IMR-90 (cell line): ENCODE measurements at regions of chr2 and their contacts with region 1.

Region 1: DNA sequence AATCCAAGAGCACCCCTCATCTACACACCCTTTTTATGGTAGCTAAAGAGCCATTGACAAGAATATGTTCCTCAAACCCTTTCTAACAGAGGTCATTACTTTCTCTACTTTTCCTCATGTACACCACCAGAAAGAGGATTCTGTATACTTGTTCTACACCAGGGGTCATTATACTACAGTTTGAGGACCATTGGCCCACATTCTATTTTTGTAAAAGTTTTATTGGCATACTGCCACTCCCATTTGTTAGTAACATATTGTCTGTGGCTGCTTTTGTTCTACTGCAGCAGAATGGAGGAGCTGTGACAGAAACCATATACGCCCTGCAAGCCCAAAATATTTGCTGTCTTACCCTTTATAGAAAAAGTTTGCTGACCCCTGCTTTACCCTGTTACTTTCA is 14.3 kb downstream of the HTR2B start:
- DNase-seq: peak; percentile 60
- ATAC-seq: no peak; the same call in 1 of the 2 replicates
- H3K4me3 ChIP-seq: no peak overlapping the region
- H3K27ac ChIP-seq: peak overlapping the region; percentile 47; the same call in 1 of the 2 replicates
- H3K4me1 ChIP-seq: peaks cover 16% of the 10 kb centered on the region
- H3K27me3 ChIP-seq: no peaks in the 10 kb centered on the region
- CTCF ChIP-seq: peak; percentile 40
- POLR2A ChIP-seq: no peak
- RAD21 ChIP-seq: peak; percentile 49

Region 2: GRCh38 chr2:231161877-231162329 is 51.4 kb after region 1 on chr2:
- CTCF ChIA-PET with region 1: no interaction called
- POLR2A ChIA-PET with region 1: no interaction called
- dilution Hi-C with region 1: no loop called
- in situ Hi-C with region 1: no loop called
- intact Hi-C with region 1: loop called (anchors 5 kb)
- DNase-seq: peak; percentile 99
- ATAC-seq: peak; percentile 89
- H3K4me3 ChIP-seq: no peak overlapping the region
- H3K27ac ChIP-seq: peak overlapping the region; percentile 88; the same call in 1 of the 2 replicates
- H3K4me1 ChIP-seq: peaks cover 23% of the 10 kb centered on the region
- H3K27me3 ChIP-seq: no peaks in the 10 kb centered on the region
- CTCF ChIP-seq: no peak
- POLR2A ChIP-seq: 0 out of 2 replicates have a peak, but pooled peaks have one; percentile 37
- RAD21 ChIP-seq: peak; percentile 17; the same call in 1 of the 2 replicates

Region 3: DNA sequence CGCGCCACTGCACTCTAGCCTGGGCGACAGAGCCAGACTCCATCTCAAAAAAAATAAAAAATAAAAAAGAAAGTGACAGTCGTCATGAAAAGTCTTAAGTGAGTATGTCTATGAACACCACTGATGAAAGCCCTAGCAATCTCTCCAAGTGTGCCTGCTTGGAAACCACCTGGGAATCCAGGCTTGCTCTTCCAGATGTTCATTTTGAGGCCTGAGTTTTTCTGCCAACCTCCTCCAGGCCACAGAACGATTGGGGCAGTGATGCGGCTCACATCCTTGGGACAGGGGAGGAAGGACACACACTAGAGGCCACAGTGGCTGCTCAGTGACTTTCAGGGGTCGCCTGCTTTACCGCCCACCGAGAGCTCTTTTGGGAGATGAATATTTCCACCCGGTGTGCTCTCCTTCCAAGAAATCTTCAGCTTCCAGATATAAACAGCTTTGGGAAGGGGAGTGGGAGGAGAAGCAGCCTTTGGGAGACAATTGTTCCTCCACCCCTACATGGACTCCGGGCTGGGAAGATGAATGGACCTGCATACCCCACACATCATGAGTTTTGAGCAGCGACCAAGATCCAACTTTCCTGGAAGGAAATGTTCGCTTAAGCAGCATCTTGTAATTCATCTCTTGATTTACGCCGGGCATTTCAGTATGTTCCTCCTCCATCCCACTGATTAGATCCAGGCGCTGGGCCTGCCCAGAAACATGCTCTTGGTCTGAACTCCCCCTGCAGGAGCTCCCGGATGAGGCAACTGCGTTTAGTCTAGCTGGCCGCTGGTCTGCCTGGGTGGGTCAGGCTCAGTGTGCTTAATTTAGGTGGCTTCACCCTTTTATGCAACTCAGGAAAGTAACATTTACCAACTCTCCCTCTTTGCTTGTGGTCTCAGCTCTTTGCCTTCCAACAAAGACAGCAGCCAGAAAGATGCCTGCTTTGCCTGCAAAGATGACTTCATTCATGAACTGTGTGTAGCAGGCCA is 81.6 kb after region 1 on chr2:
- CTCF ChIA-PET with region 1: interaction called, 6 read pairs
- POLR2A ChIA-PET with region 1: interaction called, 3 read pairs
- dilution Hi-C with region 1: no loop called
- in situ Hi-C with region 1: loop called (anchors 5 kb)
- intact Hi-C with region 1: no loop called
- DNase-seq: peak; percentile 83
- ATAC-seq: peak; percentile 98
- H3K4me3 ChIP-seq: no peak overlapping the region
- H3K27ac ChIP-seq: peak overlapping the region; percentile 71; the same call in 1 of the 2 replicates
- H3K4me1 ChIP-seq: peaks cover 14% of the 10 kb centered on the region; the same call in 1 of the 2 replicates
- H3K27me3 ChIP-seq: no peaks in the 10 kb centered on the region
- CTCF ChIP-seq: peak; percentile 82
- POLR2A ChIP-seq: no peak
- RAD21 ChIP-seq: peak; percentile 84